A549 (cell line): ENCODE measurements at regions of chr6 and their contacts with region 1.

Region 1: DNA sequence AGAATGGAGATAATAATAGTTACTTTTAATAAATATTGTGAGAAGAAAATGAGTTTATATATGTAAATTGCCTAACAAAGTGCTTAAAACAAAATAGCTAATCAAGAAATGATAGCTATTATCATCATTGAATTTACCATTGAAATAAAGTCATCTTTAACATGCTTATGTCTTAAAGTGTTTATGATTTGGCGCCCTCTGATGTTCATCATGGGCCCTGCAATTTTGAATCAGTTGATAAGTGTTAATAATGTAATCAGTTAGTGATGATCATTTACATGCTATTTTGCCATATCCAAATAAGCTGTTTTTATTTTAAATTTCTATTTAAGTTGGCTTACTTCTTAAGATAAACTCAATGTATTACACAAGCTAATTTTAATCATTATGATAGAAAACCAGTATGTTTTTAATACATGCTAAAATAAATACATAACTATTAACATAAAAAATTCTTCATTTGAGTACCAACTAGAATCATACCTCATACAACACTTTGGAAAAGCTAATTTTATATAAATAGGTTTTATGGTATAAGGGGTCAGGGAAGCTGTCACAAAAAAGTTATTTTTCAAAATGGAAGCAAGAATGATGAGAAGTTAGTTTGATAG is 39.2 kb upstream of the TPD52L1 start:
- DNase-seq: peak; percentile 15 to 48
- ATAC-seq: no peak
- H3K4me3 ChIP-seq: no peak overlapping the region
- H3K27ac ChIP-seq: no peak overlapping the region
- H3K4me1 ChIP-seq: no peaks in the 10 kb centered on the region
- CTCF ChIP-seq: peak; percentile 65
- EP300 ChIP-seq: no peak
- POLR2A ChIP-seq: no peak
- RAD21 ChIP-seq: peak; percentile 79 to 84

Region 2: GRCh38 chr6:124870611-124871459 is 243.5 kb before region 1 on chr6:
- CTCF ChIA-PET with region 1: interaction called, 18 read pairs
- POLR2A ChIA-PET with region 1: interaction called, 3 read pairs
- DNase-seq: peak in 1 of 2 experiments; percentile 41
- ATAC-seq: no peak
- H3K4me3 ChIP-seq: no peak overlapping the region
- H3K27ac ChIP-seq: no peak overlapping the region
- H3K4me1 ChIP-seq: no peaks in the 10 kb centered on the region; the same call in 2 of the 3 replicates
- CTCF ChIP-seq: peak; percentile 81
- EP300 ChIP-seq: no peak
- POLR2A ChIP-seq: no peak
- RAD21 ChIP-seq: peak; percentile 85 to 90

Region 3: DNA sequence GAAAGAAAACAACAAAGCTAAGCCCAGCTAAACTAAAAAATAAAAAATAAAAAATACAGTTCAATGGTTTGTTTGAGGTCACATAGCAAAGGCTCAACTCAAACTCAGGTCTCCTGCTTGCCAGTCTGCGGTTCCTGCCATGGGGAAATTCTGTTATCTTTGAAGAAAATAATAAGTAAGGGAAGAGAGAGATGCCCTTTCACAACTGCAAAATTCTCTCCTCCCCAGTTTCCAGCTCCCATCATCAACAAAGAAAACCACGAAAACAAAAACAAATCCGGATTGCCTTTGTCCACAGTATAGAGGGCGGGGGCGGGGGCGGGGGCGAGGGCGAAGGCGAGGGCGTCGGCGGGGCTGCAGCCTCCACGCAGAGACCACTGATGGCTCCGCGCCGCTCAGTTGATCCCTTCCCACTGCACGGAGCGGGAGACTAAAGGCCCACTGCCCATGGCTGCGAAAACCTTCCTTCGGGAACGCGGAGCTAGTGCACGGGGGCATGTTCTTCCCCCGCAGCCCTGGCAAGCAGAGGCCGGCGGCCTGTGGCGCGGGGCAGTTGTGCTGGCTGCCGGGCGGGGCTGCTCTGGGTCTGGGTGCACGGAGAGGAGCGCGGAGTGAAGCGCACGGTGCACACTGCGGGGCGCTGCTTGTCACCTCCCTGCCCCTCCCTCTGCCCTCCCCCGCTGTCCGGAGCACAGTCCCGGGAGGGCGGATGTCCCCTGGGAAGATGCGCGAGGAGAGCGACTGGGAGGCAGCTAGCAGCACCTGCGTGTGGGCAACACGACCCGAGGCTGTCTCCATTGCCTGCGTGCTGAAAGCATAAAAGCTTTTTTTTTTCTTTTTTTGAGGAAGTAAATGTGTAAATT is 14.9 kb before region 1 on chr6:
- CTCF ChIA-PET with region 1: interaction called, 10 read pairs
- POLR2A ChIA-PET with region 1: interaction called, 3 read pairs
- DNase-seq: peak; percentile 71 to 85
- ATAC-seq: peak; percentile 97
- H3K4me3 ChIP-seq: peak overlapping the region; percentile 49
- H3K27ac ChIP-seq: peak overlapping the region; percentile 76 to 86
- H3K4me1 ChIP-seq: peaks cover 44% of the 10 kb centered on the region
- CTCF ChIP-seq: peak; percentile 8; the same call in 1 of the 3 replicates
- EP300 ChIP-seq: no peak
- POLR2A ChIP-seq: peak; percentile 24; the same call in 1 of the 2 replicates
- RAD21 ChIP-seq: peak; percentile 4 to 25; a peak in 1 of 5 replicates